Posterior vena cava (tissue), 2 donors: ENCODE measurements at regions of chr2 and their contacts with region 1.

Region 1: DNA sequence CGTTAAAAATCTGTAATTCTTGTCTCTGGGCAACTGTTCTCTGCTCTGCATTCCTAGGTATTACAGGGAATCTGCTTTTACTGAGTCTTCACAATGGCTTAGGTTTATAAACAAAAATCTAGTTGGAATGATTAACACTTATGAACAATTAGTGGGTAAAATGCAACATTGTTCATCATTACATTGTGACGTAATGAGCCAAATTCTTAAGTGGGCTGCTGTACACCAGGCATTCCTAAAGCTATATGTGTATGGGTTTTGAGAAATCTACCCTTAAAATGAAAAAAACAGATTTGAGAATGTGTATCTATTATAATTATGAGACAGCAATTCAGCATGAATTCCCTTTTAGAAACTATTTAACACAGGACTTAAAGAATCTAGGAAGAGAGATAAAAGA is 41.5 kb upstream of the ERBB4 start:
- DNase-seq: no peak

Region 2: DNA sequence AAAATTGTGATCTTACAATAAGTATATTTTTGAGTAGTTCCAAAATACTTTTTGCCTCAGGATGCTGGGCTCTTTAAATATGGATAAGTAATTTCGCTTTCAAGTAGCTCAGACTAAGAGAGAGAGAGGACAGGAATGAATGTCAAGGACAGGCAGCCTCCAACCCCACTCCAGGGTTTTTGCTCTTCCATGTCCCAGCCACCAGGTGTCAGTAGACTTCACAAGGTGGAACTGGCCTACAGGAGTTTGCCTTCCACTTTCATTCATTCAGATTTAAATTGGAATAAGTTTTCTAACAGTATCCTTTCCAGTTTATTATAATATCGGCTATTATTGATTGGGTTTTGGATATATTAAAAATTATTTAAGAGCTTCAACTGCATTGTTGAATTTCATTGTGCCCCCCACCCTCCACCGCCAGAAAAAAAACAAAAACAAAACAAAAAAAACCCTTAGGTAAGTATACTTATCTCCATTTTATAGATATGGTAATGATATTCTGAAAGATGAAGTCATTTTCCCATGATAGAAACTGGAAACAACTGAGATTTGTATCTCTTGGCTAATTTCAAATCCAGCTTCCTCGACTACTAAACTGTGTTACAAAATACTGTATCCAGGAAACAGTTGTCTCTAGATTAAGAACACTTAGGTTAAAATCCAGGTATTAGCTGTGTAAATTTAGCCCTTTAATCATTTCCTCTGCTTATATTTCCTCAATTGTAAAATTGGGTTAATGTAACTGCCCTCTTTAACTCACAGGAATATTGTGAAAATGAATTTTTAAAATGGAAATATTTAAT is 834.6 kb before region 1 on chr2:
- intact Hi-C with region 1: loop called in 1 of 2 experiments (anchors 10 kb)
- DNase-seq: no peak

Region 3: DNA sequence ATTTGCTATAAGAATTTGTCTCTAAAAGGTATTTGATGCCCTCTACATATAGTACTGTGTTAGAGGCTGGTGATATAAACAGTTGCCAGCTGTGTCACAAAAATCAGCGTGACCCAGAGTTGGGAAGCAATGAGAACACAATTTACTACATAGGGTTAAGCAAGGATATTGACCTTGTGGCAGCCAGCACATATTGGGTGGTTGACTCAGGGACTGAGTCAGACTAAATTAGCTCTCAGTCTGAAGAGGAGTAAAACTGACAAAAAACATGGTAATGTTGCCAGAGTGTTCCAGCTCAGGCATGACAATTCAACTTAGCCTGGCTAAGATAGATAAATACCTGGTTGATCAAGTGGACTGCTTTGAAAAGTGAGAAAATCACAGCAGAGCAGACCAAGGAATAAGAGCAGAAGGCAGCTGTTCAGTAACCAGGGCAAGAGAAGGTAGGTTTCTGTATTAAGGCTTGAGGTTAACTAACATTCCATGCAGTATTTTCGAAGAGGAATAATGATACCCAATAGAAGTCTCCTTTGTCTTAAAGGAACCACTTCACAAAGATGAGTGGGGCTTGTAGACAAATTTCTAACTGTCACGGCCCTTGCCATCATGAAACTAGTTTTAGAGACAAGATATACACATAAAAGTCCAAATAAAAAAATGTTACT is 66.7 kb after region 1 on chr2:
- intact Hi-C with region 1: no loop called
- DNase-seq: no peak